ENCODE measurements at regions of chr2 and their contacts with region 1.

Region 1: DNA sequence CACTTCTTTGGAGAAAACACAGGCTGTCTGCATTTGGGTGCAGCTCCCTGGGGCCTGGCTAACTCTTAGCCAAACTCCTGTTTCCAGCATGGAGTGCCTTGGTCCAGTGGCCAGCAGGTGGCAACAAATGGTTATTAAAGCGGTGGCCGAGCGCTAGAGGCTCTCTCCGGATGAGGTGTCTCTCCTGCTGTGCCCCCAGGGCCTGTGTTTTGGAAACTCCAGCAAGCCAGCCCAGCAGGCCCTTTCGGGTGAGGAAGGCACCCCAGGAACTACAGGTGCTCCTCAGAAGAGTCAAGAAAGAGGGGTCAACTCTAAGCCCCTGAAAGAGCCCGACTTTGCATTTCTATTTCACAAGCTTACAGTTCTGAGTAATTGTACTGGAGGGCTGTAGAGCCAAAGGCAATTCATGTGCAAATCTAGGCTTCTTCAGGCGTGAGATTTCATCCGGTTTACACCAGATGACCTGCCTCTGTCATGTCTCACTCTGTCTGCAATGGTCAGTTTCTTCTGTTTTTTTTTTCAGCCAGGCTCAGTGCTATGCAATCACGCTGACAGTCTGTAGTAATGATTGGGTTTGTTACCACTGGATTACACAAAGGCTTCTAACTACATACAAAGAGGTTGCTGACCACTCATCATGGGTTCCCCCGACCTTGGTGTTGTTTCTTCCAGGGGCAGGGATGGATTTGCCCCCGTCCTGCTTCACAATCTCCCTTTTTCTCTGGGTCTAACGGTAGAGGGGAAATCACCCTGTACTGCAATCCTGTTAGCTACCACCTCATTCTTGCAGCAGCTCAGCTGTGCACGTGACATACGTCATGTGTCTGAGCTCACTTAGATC is 7.6 kb upstream of the CHRNA1 start:
- DNase-seq: peak; percentile 81
- ATAC-seq: peak; percentile 88
- H3K4me3 Mint-ChIP-seq: no peak overlapping the region
- H3K27ac Mint-ChIP-seq: no peak overlapping the region
- H3K4me1 Mint-ChIP-seq: peaks cover 16% of the 10 kb centered on the region
- H3K27me3 Mint-ChIP-seq: no peaks in the 10 kb centered on the region
- CTCF ChIP-seq: peak; percentile 65

Region 2: DNA sequence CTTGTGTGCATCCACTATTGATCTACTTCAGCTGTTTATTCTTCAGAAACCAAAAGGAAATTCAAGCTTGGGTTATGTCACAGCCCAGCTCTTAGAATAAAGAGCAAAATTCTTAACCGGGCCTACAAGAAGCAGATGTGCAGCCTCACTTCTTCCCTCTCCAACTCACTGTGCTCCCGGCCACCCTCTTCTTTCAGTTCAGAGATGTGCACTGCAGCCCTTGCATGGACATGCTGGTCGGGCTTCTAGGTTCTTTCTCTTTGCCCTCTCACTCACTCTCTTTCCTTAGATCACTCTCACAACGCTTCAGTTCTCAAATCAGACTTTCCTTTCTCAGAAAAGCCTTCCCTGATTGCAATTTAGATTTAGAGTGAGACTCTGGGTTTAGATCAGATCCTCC is 129.2 kb after region 1 on chr2:
- CTCF ChIA-PET with region 1: interaction called, 18 read pairs
- POLR2A ChIA-PET with region 1: no interaction called
- intact Hi-C with region 1: no loop called
- DNase-seq: no peak
- ATAC-seq: no peak
- H3K4me3 Mint-ChIP-seq: peak overlapping the region; percentile 9
- H3K27ac Mint-ChIP-seq: peak overlapping the region; percentile 47
- H3K4me1 Mint-ChIP-seq: peaks cover 24% of the 10 kb centered on the region
- H3K27me3 Mint-ChIP-seq: no peaks in the 10 kb centered on the region
- CTCF ChIP-seq: no peak

Region 3: GRCh38 chr2:174985630-174986029 is 213.8 kb after region 1 on chr2:
- CTCF ChIA-PET with region 1: interaction called, 31 read pairs
- POLR2A ChIA-PET with region 1: no interaction called
- intact Hi-C with region 1: loop called (anchors 5 kb)
- DNase-seq: no peak
- ATAC-seq: no peak
- H3K4me3 Mint-ChIP-seq: no peak overlapping the region
- H3K27ac Mint-ChIP-seq: no peak overlapping the region
- H3K4me1 Mint-ChIP-seq: peaks cover 6% of the 10 kb centered on the region
- H3K27me3 Mint-ChIP-seq: peaks cover 4% of the 10 kb centered on the region
- CTCF ChIP-seq: peak; percentile 41

Measured in activated CD8-positive, alpha-beta T cell treated with anti-CD3 and anti-CD28 coated beads for 36 hours (primary cell).